Activated CD4-positive, alpha-beta T cell treated with anti-CD3 and anti-CD28 coated beads for 36 hours (primary cell): ENCODE measurements at regions of chr9 and their contacts with region 1.

Region 1: DNA sequence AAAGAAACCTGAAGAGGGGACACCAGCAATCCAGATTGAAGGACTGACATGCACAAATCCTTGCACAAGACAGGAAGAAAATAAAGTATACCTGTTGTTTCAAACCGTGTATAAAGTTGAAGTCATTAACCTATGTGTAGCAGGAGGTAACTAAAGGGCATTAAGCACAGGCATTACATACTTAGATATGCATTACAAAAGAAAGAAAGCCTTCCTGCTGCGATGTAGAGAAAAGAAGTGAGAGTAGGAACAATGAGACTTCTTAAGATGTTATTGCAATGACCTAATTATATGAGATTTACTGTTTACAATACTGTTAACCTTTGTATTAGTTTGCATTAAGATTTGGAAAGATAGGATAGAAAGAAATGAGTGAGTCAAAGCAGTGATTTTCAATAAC is 308.9 kb upstream of the PTPRD start:
- DNase-seq: no peak
- ATAC-seq: no peak
- H3K4me3 Mint-ChIP-seq: no peak overlapping the region
- H3K27ac Mint-ChIP-seq: no peak overlapping the region
- H3K4me1 Mint-ChIP-seq: no peaks in the 10 kb centered on the region
- H3K27me3 Mint-ChIP-seq: no peaks in the 10 kb centered on the region

Region 2: GRCh38 chr9:10869687-10870086 is 52.0 kb before region 1 on chr9:
- CTCF ChIA-PET with region 1: no interaction called
- POLR2A ChIA-PET with region 1: no interaction called
- intact Hi-C with region 1: no loop called
- DNase-seq: no peak
- ATAC-seq: no peak
- H3K4me3 Mint-ChIP-seq: no peak overlapping the region
- H3K27ac Mint-ChIP-seq: no peak overlapping the region
- H3K4me1 Mint-ChIP-seq: no peaks in the 10 kb centered on the region
- H3K27me3 Mint-ChIP-seq: no peaks in the 10 kb centered on the region

Region 3: GRCh38 chr9:10983251-10983650 is 61.6 kb after region 1 on chr9:
- CTCF ChIA-PET with region 1: no interaction called
- POLR2A ChIA-PET with region 1: no interaction called
- intact Hi-C with region 1: loop called in 1 of 2 experiments (anchors 10 kb)
- DNase-seq: no peak
- ATAC-seq: no peak
- H3K4me3 Mint-ChIP-seq: no peak overlapping the region
- H3K27ac Mint-ChIP-seq: no peak overlapping the region
- H3K4me1 Mint-ChIP-seq: no peaks in the 10 kb centered on the region
- H3K27me3 Mint-ChIP-seq: no peaks in the 10 kb centered on the region

Region 4: GRCh38 chr9:11417782-11418181 is 496.1 kb after region 1 on chr9:
- CTCF ChIA-PET with region 1: no interaction called
- POLR2A ChIA-PET with region 1: no interaction called
- intact Hi-C with region 1: no loop called
- DNase-seq: no peak
- ATAC-seq: no peak
- H3K4me3 Mint-ChIP-seq: no peak overlapping the region
- H3K27ac Mint-ChIP-seq: no peak overlapping the region
- H3K4me1 Mint-ChIP-seq: no peaks in the 10 kb centered on the region
- H3K27me3 Mint-ChIP-seq: no peaks in the 10 kb centered on the region